ENCODE measurements at regions of chr2 and their contacts with region 1.

Region 1: DNA sequence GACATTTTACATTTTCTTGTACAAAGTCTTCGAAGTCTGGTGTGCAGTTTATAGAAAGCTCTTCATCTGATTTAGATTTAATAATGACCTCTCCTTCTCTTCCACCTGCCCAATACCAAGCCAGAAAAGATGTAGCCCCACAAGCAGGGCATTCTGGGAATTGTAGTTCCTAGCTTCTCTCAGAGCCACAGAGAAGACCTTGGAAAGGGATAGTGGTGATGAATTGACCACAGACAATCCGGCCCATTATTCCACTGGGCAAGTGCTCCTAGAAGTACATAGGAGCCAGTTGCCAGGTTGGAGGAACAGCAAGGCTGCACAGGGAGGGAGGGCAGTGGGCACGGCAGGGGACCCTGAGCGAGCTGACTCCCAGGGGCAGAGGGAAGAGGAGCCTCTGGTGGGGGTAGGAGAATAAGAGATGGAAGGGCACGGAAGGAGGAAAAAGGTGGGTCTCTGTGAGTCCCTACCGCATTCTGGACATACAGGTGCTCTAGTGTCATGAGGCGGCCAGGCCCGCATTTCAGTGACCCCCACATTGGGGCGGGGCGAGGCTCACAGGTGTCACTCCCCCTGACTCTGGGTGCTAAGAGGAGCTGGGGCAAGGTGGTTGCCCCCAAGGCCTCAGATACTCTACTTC is 152.5 kb upstream of the HAAO start:
- DNase-seq: peak in 2 of 4 experiments; percentile 44 to 47
- ATAC-seq: peak; percentile 76
- H3K4me3 ChIP-seq: no peak overlapping the region
- H3K27ac ChIP-seq: no peak overlapping the region
- H3K4me1 ChIP-seq: peaks cover 2 to 18% of the 10 kb centered on the region in 2 experiments; a peak in 4 of 5 replicates
- H3K27me3 ChIP-seq: no peaks in the 10 kb centered on the region
- CTCF ChIP-seq: no peak
- EP300 ChIP-seq: no peak
- POLR2A ChIP-seq: no peak
- RAD21 ChIP-seq: no peak

Region 2: DNA sequence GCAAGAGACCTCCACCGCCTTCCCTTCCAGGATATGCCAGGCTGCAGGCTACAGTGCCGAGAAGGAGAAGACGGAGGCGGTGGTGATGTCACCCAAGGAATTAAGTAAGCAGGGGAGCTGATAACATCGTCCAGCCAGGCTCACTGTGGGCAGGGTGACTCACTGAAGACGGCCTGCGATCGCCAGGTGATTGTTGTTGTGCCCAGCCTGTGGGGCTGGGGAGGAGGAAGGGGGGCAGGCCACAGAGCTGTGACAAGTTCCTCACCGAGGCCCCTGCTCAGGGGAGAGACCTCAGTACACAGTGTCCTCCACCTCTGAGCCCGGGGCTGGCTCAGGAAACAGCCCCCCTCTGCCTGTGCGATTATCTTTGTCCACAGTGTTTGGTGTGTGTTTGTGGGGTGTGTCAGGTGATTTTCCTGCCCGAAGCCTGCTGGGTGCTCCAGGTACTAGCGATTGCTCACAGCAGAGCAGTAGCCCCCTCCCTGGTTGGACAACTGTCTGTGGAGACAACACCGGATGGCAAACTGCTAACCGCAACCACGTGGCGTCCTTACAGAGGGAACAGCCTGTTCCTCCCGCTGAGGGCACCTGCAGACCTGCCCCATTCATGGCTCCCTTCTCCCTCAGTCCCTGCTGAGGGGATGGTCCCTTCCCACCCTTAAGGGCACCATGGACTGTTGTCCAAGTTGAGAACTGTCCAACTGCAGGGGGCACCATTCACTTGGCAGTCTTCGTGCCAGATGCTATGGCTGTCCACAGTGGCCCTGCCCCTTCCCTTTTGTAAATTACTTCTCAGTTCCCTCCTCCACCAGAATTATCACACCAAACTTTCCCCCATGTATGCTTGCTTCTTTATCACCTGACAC is 186.4 kb after region 1 on chr2:
- CTCF ChIA-PET with region 1: no interaction called
- POLR2A ChIA-PET with region 1: no interaction called
- in situ Hi-C with region 1: no loop called
- intact Hi-C with region 1: loop called (anchors 2 kb)
- DNase-seq: peak; percentile 76 to 79 (median 77)
- ATAC-seq: peak; percentile 83
- H3K4me3 ChIP-seq: no peak overlapping the region
- H3K27ac ChIP-seq: peak overlapping the region; percentile 45; the same call in 2 of the 3 replicates
- H3K4me1 ChIP-seq: peaks cover 23 to 47% of the 10 kb centered on the region in 2 experiments; a peak in 4 of 5 replicates
- H3K27me3 ChIP-seq: no peaks in the 10 kb centered on the region
- CTCF ChIP-seq: peak; percentile 64 to 71 (median 66)
- EP300 ChIP-seq: peak; percentile 5; the same call in 1 of the 2 replicates
- POLR2A ChIP-seq: no peak
- RAD21 ChIP-seq: peak; percentile 54 to 83

Region 3: GRCh38 chr2:43210467-43211303 is 265.8 kb after region 1 on chr2:
- CTCF ChIA-PET with region 1: no interaction called
- POLR2A ChIA-PET with region 1: no interaction called
- in situ Hi-C with region 1: no loop called
- intact Hi-C with region 1: no loop called
- DNase-seq: peak; percentile 56 to 77 (median 58)
- ATAC-seq: peak; percentile 80
- H3K4me3 ChIP-seq: no peak overlapping the region
- H3K27ac ChIP-seq: peak overlapping the region; percentile 53; the same call in 2 of the 3 replicates
- H3K4me1 ChIP-seq: peaks cover 26 to 32% of the 10 kb centered on the region in 2 experiments
- H3K27me3 ChIP-seq: no peaks in the 10 kb centered on the region
- CTCF ChIP-seq: no peak
- EP300 ChIP-seq: peak; percentile 51
- POLR2A ChIP-seq: no peak
- RAD21 ChIP-seq: peak in 1 of 2 experiments; percentile 32; a peak in 1 of 4 replicates

Region 4: GRCh38 chr2:43542285-43542937 is 597.5 kb after region 1 on chr2:
- CTCF ChIA-PET with region 1: interaction called, 12 read pairs
- POLR2A ChIA-PET with region 1: no interaction called
- in situ Hi-C with region 1: no loop called
- intact Hi-C with region 1: loop called (anchors 2 kb)
- DNase-seq: peak; percentile 20 to 38 (median 32)
- ATAC-seq: peak; percentile 70
- H3K4me3 ChIP-seq: no peak overlapping the region
- H3K27ac ChIP-seq: no peak overlapping the region
- H3K4me1 ChIP-seq: peaks cover 0 to 4% of the 10 kb centered on the region in 2 experiments; a peak in 1 of 5 replicates
- H3K27me3 ChIP-seq: no peaks in the 10 kb centered on the region
- CTCF ChIP-seq: peak in 2 of 3 experiments; percentile 36 to 72; a peak in 4 of 6 replicates
- EP300 ChIP-seq: no peak
- POLR2A ChIP-seq: no peak
- RAD21 ChIP-seq: peak; percentile 61 to 74

Region 5: DNA sequence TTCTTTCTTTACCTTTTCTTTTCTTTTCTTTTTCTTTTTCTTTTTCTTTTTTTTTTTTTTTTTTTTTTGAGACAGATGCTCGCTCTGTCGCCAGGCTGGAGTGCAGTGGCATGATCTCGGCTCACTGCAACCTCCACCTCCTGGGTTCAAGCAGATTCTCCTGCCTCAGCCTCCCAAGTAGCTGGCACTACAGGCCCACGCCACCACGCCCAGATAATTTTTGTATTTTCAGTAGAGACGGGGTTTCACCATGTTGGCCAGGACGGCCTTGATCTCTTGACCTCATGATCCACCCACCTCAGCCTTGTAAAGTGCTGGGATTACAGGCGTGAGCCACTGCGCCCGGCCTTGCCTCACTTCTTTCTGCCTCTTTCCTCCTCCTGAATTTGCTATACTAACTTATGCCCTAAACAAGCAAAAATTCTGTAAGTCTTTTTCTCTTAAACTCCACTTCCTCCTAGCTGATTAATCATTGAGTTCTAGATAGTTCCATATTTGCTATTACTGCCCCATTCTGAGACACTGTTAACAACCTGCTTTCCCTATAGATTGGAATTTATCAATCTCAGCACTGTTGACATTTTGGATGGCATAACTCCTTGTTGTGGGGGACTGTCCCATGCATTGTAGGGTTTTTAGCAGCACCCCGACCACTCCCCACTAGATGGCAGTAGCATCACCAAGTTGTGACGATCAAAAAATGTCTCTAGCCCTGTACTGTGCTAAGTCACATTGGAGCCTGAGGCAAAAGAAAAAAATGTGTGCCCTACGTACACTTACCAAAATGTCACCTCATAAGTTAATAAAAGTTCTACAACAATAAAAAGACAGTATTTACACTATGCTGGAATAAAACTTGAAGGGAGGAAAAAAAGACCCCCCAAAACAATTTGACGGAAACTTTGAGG is 667.3 kb after region 1 on chr2:
- CTCF ChIA-PET with region 1: interaction called, 3 read pairs
- POLR2A ChIA-PET with region 1: no interaction called
- in situ Hi-C with region 1: no loop called
- intact Hi-C with region 1: loop called (anchors 5 kb)
- DNase-seq: peak; percentile 68 to 81 (median 73)
- ATAC-seq: peak; percentile 95
- H3K4me3 ChIP-seq: no peak overlapping the region
- H3K27ac ChIP-seq: no peak overlapping the region
- H3K4me1 ChIP-seq: peaks cover 0 to 2% of the 10 kb centered on the region in 2 experiments; a peak in 1 of 5 replicates
- H3K27me3 ChIP-seq: no peaks in the 10 kb centered on the region
- CTCF ChIP-seq: peak; percentile 68 to 86 (median 84)
- EP300 ChIP-seq: no peak
- POLR2A ChIP-seq: no peak
- RAD21 ChIP-seq: peak; percentile 63 to 85

Measured in K562 (cell line).